ENCODE measurements at regions of chr1 and their contacts with region 1.

Region 1: GRCh38 chr1:222455188-222455879 is 92.6 kb downstream of the HHIPL2 start:
- DNase-seq: peak; percentile 87
- H3K4me3 ChIP-seq: peak overlapping the region; percentile 8
- H3K27ac ChIP-seq: peak overlapping the region; percentile 75
- H3K4me1 ChIP-seq: peaks cover 5% of the 10 kb centered on the region
- H3K27me3 ChIP-seq: peaks cover 3% of the 10 kb centered on the region
- CTCF ChIP-seq: peak; percentile 98

Region 2: GRCh38 chr1:220810179-220810653 is 1645.1 kb before region 1 on chr1:
- CTCF ChIA-PET with region 1: no interaction called
- POLR2A ChIA-PET with region 1: no interaction called
- intact Hi-C with region 1: loop called (anchors 5 kb)
- DNase-seq: peak; percentile 87
- H3K4me3 ChIP-seq: peak overlapping the region; percentile 14
- H3K27ac ChIP-seq: no peak overlapping the region
- H3K4me1 ChIP-seq: peaks cover 7% of the 10 kb centered on the region
- H3K27me3 ChIP-seq: no peaks in the 10 kb centered on the region
- CTCF ChIP-seq: peak; percentile 92

Region 3: DNA sequence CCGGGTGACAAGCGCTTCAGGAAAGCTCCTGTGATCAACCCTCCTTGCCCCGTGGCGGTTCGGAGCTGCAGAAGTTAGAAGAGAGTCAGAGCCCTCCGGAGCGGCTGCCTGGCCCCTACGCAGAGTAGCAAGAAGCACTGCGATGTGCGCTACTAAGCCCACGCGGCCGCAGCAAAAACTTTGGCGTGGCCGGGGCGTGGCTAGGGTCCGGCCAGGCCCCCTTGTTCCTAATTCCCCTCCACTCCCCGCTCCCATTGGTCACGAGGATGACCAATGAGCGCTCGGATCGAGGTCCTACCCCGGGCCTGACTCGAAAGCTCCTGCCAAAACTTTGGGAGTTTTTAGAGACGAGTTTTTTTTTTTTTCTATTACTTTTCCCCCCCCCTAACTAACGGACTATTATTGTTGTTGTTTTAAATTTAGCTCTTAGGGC is 1576.2 kb before region 1 on chr1 and contains the start of gene HLX:
- CTCF ChIA-PET with region 1: no interaction called
- POLR2A ChIA-PET with region 1: no interaction called
- intact Hi-C with region 1: loop called (anchors 5 kb)
- DNase-seq: peak; percentile 75
- H3K4me3 ChIP-seq: peak within 1 kb of the TSS; percentile 52
- H3K27ac ChIP-seq: no peak within 1 kb of the TSS
- H3K4me1 ChIP-seq: peaks cover 3% of the 10 kb centered on the region
- H3K27me3 ChIP-seq: peaks cover 87% of the 10 kb centered on the region
- CTCF ChIP-seq: no peak
- total RNA-seq, gene HLX: not detected in 2 replicates

Region 4: DNA sequence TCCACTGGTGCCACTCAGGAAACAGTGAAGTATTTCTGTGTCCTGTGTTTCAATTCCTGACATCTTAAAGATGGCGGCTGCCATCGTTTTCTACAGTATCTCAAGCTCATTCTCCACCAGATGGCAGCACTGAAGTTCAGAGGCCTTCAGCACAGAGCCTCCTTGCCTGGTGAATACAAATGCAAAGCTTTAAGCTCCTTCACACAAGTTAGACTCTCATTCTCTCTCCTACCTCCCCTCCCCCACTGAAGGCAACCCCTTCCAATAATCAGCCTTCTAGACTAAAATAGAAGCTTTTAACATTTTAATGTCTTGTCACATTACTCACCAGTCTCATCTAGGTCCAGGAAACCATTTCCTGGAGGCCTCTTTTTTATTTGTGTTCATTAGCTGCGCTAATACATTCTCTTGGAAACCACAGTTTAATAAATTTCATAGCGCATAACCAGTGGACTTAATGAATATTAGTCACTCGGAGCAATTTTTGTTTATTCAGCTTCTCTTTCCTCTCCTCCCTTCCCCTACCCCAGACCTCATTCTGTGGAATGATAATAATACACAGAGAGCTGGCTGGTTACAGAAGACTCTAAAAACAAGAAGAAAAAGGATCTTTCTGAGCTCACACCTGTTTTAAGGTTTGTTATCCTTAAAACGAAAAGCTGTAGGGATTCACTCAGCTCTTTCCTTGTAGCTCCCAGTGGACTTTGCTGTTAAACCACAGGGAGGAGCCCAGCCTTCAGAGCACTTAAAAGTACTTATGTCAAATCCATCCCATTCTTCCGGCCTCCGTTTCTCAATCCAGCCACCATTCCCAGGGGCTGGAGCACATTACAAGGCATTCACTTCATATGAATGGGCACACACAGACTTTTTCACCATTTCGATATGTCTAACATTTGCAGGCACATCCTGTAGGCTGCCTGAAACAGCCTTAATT is 1191.2 kb before region 1 on chr1:
- CTCF ChIA-PET with region 1: interaction called, 8 read pairs
- POLR2A ChIA-PET with region 1: no interaction called
- intact Hi-C with region 1: loop called (anchors 2 kb)
- DNase-seq: peak; percentile 83
- H3K4me3 ChIP-seq: no peak overlapping the region
- H3K27ac ChIP-seq: no peak overlapping the region
- H3K4me1 ChIP-seq: no peaks in the 10 kb centered on the region
- H3K27me3 ChIP-seq: peaks cover under 1% of the 10 kb centered on the region
- CTCF ChIP-seq: peak; percentile 66

Region 5: GRCh38 chr1:221478050-221478949 is 977.0 kb before region 1 on chr1:
- CTCF ChIA-PET with region 1: interaction called, 3 read pairs
- POLR2A ChIA-PET with region 1: no interaction called
- intact Hi-C with region 1: loop called (anchors 2 kb)
- DNase-seq: peak; percentile 34
- H3K4me3 ChIP-seq: no peak overlapping the region
- H3K27ac ChIP-seq: no peak overlapping the region
- H3K4me1 ChIP-seq: no peaks in the 10 kb centered on the region
- H3K27me3 ChIP-seq: peaks cover 46% of the 10 kb centered on the region
- CTCF ChIP-seq: peak; percentile 40; the same call in 1 of the 2 replicates

Region 6: DNA sequence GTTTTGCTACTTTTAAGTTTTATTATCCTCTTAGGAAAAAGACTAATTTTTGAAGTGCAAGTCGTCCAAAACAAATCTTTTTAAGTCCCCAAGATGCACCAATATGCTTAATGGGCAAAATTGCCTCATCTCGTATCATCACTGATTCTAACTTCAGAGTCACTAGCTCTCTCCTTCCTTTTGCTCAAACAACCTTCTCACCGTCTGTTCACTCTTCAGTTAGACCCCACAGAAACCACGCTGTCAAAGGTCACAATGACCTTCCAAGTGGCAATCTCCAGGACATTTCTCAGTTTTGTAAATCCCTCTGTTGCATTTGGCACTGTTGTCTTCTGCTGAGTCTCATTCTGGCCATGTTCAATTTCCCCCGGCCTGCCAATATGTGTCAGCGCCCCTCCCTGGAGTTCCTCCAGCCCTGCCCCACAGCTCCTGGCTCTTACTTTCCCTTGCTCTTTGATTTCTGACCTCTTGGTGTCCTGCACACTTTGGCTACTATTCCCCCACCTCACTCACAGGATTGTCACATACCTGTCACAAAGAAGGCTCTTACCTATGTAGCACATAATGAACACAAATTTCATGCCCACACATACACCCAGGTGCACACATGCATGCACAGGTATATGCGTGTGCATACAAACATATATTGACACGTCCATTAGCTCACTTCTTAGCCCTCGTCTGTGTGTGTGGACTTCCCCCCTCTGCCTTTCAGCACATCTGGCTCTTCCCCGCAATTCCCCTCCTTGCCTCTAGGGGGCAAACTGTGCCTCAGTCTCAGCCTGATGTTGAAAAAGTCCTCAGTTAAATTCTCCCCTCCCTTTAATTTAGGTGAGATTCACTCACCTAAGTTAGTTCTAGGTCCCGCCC is 359.5 kb before region 1 on chr1:
- CTCF ChIA-PET with region 1: no interaction called
- POLR2A ChIA-PET with region 1: no interaction called
- intact Hi-C with region 1: loop called (anchors 2 kb)
- DNase-seq: peak; percentile 52
- H3K4me3 ChIP-seq: no peak overlapping the region
- H3K27ac ChIP-seq: no peak overlapping the region
- H3K4me1 ChIP-seq: no peaks in the 10 kb centered on the region
- H3K27me3 ChIP-seq: no peaks in the 10 kb centered on the region
- CTCF ChIP-seq: peak; percentile 88

Region 7: GRCh38 chr1:222171005-222171404 is 284.3 kb before region 1 on chr1:
- CTCF ChIA-PET with region 1: no interaction called
- POLR2A ChIA-PET with region 1: no interaction called
- intact Hi-C with region 1: loop called (anchors 10 kb)
- DNase-seq: peak; percentile 43
- H3K4me3 ChIP-seq: no peak overlapping the region
- H3K27ac ChIP-seq: no peak overlapping the region
- H3K4me1 ChIP-seq: no peaks in the 10 kb centered on the region
- H3K27me3 ChIP-seq: no peaks in the 10 kb centered on the region
- CTCF ChIP-seq: peak; percentile 58

Measured in A673 (cell line).